Cardiac septum (tissue), 1 donor: ENCODE measurements at regions of chr5 and their contacts with region 1.

Region 1: GRCh38 chr5:14871210-14872069 is at the start of gene ANKH:
- DNase-seq: peak; percentile 89
- total RNA-seq, gene ANKH: 233 TPM

Region 2: DNA sequence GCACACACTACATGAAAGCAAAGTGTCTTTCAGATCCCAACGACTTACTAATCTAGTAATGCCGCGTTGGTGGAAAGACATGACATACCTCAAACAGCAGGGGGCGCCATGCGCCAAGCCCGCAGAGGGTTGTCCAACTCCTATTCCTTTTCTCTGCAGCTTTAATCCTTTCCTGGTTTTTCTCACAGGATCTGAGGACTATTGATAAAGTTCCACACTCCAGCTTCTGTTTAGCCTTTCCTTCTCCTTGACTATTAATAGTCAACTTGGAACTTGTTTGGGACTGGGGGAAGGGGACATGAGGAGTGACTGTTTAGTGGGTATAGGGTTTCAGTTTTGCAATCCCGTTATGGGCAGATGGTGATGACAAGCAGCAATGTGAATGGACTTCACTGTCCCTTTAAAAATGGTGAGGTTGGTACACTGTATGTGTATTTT is 144.0 kb before region 1 on chr5:
- intact Hi-C with region 1: loop called (anchors 2 kb)
- DNase-seq: no peak

Region 3: GRCh38 chr5:14743601-14744295 is 127.7 kb before region 1 on chr5:
- intact Hi-C with region 1: loop called (anchors 5 kb)
- DNase-seq: peak; percentile 44

Region 4: DNA sequence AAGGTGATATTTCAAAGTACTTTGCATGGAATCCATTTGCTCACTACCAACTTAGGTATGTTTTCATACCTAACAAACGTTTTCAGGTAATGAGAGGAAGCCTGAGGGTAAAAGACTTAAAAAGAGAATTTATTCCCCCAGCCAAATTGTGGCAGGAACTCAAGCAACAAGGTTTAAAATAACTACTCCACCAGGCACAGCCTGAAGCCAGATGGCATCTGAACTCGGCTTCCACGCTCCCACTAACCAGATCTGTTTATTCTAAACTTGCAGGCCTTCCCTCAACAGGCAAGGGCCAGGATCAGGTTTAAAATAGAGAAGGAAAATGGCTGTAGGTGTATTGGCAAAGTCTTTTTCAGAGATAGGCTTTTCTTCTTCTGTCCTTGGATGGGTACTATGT is 117.5 kb before region 1 on chr5:
- intact Hi-C with region 1: loop called (anchors 1 kb)
- DNase-seq: no peak

Region 5: GRCh38 chr5:14809369-14810155 is 61.9 kb before region 1 on chr5:
- intact Hi-C with region 1: loop called (anchors 5 kb)
- DNase-seq: no peak

Region 6: DNA sequence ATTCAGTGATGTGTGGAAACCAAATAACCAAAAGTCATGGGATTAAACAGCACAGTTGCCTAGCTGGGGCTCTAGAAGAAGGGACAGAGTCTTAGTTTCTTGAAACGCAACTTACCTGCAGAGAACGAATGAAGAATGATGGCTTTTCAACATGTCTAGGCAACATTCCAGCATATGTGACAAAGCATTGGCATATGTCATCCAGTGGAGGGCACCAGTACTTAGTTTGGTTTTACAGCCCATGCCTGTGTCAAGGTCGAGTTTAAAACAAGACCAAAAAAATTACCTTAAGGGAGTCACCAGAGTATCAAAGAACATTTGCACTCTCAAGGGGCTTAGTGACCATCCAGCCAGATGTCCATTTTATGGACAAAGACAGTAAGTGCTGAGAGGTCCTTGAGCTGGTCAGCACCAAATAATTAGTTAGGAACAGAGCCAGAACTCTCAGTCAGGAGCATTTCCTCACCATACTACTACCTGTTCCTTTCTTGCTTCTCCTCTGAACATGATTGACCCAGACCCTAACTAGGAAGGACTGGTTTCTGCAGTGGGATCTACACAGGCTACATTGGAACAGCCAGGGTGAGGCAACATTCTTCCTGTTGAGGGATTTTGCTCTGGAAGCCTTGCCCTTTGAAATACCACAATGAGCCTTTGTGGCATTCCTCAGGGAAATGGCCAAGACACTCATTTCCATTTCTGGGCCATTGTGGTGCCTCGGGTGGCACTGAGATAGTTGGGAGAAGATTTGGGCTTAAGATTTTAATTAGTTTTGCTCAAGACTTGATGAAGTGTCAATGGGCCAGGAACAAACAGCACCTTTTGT is 75.6 kb after region 1 on chr5:
- intact Hi-C with region 1: loop called (anchors 5 kb)
- DNase-seq: no peak

Region 7: GRCh38 chr5:15013654-15014463 is 142.4 kb after region 1 on chr5:
- intact Hi-C with region 1: loop called (anchors 1 kb)
- DNase-seq: no peak

Region 8: DNA sequence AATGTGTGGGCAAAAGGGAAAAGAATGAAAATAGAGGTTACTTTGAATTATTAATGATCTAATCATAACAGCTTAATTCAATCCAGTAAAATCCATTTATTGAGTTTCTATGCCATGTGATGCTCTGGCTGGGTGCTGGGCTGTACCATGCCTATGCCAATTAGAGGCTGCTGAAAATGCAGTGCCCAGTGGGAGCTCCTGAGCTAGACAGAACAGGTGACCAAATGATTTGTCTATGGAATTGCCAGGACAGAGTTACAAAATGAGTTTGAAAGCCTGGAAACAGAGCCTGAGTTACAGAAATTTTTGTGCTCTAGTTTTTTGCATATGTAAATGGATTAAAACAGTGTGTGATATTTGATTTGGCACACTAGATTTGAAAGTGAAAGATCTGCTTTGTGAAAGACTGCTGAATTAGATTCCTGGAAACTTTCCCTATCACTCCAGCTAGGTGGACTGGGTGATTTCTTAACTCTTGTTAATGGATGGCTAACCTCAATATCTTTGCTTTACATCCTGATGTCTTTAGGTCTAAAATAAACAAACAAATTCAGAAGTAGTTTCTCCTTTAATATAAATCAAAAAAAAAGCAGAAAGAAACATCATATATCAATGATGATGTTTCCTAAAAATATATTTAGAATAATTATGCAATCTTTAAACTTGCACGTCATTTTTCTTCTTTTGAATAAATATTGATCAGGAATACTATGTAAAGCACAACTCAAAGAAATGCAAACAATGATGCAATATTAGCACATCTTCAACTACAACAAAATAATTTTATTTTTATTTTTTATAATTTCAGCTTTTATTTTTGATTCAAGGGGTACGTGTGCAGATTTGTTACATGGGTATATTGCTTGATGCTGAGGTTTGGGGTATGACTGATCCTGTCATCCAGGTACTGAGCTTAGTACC is 433.7 kb after region 1 on chr5:
- intact Hi-C with region 1: no loop called
- DNase-seq: no peak